Upper lobe of right lung (tissue), 1 donor: ENCODE measurements at regions of chr14 and their contacts with region 1.

Region 1: GRCh38 chr14:76876076-76876475 is 49.9 kb downstream of the LRRC74A start:
- DNase-seq: no peak
- ATAC-seq: peak; percentile 94
- H3K4me3 ChIP-seq: no peak overlapping the region
- H3K27ac ChIP-seq: no peak overlapping the region
- H3K4me1 ChIP-seq: no peaks in the 10 kb centered on the region
- H3K27me3 ChIP-seq: no peaks in the 10 kb centered on the region
- CTCF ChIP-seq: peak; percentile 96

Region 2: GRCh38 chr14:77067632-77068514 is 191.8 kb after region 1 on chr14:
- intact Hi-C with region 1: loop called (anchors 5 kb)
- DNase-seq: peak; percentile 85
- ATAC-seq: peak; percentile 89
- H3K4me3 ChIP-seq: no peak overlapping the region
- H3K27ac ChIP-seq: no peak overlapping the region
- H3K4me1 ChIP-seq: peaks cover 10% of the 10 kb centered on the region
- H3K27me3 ChIP-seq: no peaks in the 10 kb centered on the region
- CTCF ChIP-seq: peak; percentile 89